ENCODE measurements at regions of chr12 and their contacts with region 1.

Region 1: DNA sequence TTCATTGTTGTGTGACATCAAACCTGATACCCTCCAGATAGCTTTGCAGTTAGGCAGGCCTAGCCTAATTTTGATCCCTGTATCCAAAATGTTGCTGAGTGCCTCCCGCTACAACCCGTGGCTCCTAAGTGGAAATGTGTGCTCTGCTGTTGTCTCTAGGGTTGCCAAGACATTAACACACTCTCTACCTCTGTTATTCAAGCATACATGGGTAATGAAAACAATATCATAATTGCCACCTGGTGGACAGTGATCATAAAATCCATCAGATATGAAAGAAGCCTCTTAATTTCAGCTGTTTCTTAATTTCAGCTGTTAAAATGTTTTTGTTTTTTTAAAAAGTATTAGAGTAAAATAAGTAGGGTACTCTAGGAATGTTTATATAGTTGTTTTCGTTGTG is 93.5 kb downstream of the PLEKHA5 start:
- DNase-seq: no peak
- ATAC-seq: peak; percentile 88

Region 2: GRCh38 chr12:19439059-19440018 is 216.3 kb after region 1 on chr12 and contains the start of gene AEBP2:
- intact Hi-C with region 1: loop called (anchors 5 kb)
- DNase-seq: peak; percentile 96
- ATAC-seq: peak; percentile 97
- total RNA-seq, gene AEBP2: 28.5 TPM

Region 3: GRCh38 chr12:20077618-20078017 is 854.6 kb after region 1 on chr12:
- intact Hi-C with region 1: no loop called
- DNase-seq: no peak
- ATAC-seq: peak; percentile 74